Posterior vena cava (tissue), 2 donors: ENCODE measurements at regions of chr18 and their contacts with region 1.

Region 1: DNA sequence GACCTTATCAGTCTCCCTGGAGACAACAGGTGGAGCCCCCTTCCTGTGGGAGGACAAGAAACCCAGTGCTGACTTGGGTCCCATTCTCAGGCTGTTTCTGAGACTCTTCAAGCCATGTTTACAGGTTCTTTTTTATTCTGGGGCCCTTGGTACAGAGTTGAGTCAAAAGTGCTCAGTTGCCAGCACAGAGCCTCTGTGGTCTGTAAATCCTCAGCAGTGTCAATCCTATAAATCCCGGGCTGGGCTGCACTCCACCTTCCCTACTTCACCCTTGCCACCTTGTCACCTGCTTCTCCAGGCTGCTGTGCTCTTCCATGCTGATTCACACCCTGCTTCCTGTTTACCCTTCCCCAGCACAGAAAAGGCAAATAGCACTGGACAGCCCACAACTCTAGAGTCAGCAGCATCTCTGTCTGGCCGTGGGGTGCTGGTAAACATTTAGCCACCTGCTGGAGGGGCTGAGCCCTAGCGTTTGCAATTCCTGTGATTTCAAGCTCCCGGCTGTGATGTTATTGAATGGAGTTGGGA is 74.7 kb downstream of the TNFRSF11A start:
- DNase-seq: no peak

Region 2: DNA sequence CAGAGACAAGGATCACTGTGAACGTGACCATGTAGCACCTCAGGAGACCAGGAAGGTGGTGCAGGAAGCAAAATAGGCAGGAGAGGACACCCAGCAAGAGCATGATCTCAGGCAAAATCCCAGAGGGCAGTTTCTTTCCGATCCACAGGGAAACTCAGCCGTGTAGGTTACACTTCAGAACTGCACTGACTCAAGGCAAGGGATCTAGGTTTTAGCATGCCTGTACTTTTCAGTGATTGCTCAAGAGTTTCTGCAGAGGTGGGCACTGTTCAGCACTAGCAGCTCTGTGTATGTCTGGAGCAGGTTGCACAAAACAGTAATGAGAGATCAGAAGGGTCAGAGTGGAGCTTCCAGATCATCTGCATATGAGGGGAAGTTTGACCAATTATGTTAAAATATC is 390.3 kb before region 1 on chr18:
- intact Hi-C with region 1: no loop called
- DNase-seq: no peak

Region 3: GRCh38 chr18:62329691-62330454 is 70.0 kb before region 1 on chr18:
- intact Hi-C with region 1: loop called in 1 of 2 experiments (anchors 10 kb)
- DNase-seq: no peak